ENCODE measurements at regions of chr15 and their contacts with region 1.

Region 1: DNA sequence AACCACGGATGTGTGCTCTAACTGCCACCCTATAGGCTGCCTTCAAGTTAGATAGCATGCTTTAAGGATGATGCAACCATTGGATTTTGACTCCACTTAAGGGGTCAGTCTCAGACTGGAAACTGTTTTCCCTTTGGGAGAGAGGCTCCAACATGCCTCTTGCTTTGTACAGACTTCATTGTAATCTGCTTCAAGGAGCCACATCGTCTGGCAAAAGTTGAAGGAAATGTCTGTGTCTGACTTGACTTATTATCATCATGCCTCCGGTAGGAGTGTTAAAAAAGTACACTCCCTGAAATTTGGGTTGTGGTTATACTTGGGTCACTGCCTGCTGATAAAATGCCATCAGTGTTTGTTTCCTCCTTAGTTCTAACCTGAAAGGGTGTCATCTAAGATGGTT is 245.4 kb upstream of the CDIN1 start:
- DNase-seq: no peak
- ATAC-seq: no peak
- H3K4me3 ChIP-seq: no peak overlapping the region
- H3K4me1 ChIP-seq: no peaks in the 10 kb centered on the region
- CTCF ChIP-seq: no peak

Region 2: DNA sequence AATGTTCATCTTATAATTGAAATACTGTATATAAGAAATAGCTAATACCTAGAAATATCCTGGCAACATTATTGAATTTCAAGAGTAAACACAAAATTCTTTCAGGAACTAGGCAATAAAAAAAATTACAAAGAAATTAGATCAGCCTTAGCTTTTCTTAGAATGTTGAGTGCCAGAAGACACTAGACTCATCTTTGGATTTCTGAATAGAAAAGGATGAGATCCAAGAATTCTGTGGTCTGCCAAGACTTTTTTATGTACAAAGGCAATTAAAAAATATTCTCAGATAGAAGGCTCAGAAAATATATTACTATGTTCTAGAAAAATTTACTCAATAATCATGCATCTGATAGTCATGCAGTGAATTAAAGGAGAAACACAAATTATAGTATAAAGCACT is 49.1 kb before region 1 on chr15:
- intact Hi-C with region 1: loop called in 1 of 2 experiments (anchors 5 kb)
- DNase-seq: no peak
- ATAC-seq: no peak
- H3K4me3 ChIP-seq: no peak overlapping the region
- H3K4me1 ChIP-seq: no peaks in the 10 kb centered on the region
- CTCF ChIP-seq: no peak

Measured in mucosa of descending colon (tissue), 3 donors.